Endothelial cell of umbilical vein (primary cell): ENCODE measurements at regions of chr4 and their contacts with region 1.

Region 1: GRCh38 chr4:7101692-7102515 is 34.0 kb upstream of the GRPEL1 start:
- DNase-seq: peak; percentile 54
- H3K4me3 ChIP-seq: no peak overlapping the region
- H3K27ac ChIP-seq: no peak overlapping the region
- H3K4me1 ChIP-seq: peaks cover 8% of the 10 kb centered on the region
- H3K27me3 ChIP-seq: peaks cover 2 to 8% of the 10 kb centered on the region in 2 experiments
- CTCF ChIP-seq: peak; percentile 80 to 84
- POLR2A ChIP-seq: no peak

Region 2: GRCh38 chr4:7156761-7157488 is 55.0 kb after region 1 on chr4:
- CTCF ChIA-PET with region 1: interaction called, 3 read pairs
- POLR2A ChIA-PET with region 1: no interaction called
- dilution Hi-C with region 1: no loop called
- intact Hi-C with region 1: loop called (anchors 5 kb)
- DNase-seq: peak; percentile 11
- H3K4me3 ChIP-seq: no peak overlapping the region
- H3K27ac ChIP-seq: no peak overlapping the region
- H3K4me1 ChIP-seq: no peaks in the 10 kb centered on the region
- H3K27me3 ChIP-seq: no peaks in the 10 kb centered on the region
- CTCF ChIP-seq: peak; percentile 43 to 70
- POLR2A ChIP-seq: no peak